H1 (cell line): ENCODE measurements at regions of chr14 and their contacts with region 1.

Region 1: DNA sequence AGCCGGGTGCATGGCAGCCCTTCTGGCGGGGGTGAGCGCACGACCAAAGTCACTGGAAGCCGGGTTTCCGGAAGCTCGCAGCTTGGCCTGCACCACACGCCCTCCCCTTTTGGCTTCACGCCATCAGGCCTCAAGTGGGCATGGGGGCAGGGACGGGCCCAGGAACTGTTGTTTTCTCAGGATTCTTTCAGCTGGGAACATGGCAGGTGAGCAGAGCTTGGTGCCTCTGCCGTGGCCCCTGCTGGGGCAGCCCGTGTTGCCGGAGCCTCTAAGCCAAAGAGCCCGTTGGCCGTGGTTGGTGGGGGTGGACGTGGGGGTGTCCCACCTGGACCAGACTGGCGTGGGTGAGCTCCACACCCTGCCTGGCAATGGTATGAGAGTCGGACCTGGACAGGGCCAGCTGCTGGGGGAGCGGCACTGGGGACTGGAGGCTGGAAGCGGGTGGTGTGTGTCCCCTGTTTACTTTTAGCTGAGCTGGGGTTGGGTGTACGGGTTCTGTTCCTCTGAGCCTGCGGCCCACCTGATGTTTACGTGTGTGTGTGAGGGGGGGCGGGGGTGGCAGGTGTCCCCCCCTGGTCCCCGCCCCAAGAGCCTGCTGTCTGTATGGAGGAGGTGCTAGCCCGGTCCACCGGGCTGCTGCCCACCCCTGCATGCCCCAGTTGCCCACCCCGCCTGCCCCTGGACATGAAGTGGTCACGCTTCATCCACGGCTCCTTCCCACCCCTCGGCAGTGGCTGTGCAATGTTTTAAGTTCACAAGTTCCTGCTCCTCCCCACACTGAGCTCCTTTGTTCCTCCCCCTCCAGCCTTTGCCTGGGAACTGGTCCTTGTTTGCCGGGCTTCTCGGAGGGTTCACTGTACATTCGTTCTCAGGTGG is 28.7 kb upstream of the PLD4 start:
- DNase-seq: peak in 1 of 2 experiments; percentile 46
- H3K4me3 ChIP-seq: no peak overlapping the region
- H3K27ac ChIP-seq: no peak overlapping the region
- H3K4me1 ChIP-seq: peaks cover 0 to 3% (median 0%) of the 10 kb centered on the region in 4 experiments; a peak in 1 of 7 replicates
- H3K27me3 ChIP-seq: no peaks in the 10 kb centered on the region
- CTCF ChIP-seq: no peak
- EP300 ChIP-seq: no peak
- POLR2A ChIP-seq: no peak
- RAD21 ChIP-seq: no peak

Region 2: DNA sequence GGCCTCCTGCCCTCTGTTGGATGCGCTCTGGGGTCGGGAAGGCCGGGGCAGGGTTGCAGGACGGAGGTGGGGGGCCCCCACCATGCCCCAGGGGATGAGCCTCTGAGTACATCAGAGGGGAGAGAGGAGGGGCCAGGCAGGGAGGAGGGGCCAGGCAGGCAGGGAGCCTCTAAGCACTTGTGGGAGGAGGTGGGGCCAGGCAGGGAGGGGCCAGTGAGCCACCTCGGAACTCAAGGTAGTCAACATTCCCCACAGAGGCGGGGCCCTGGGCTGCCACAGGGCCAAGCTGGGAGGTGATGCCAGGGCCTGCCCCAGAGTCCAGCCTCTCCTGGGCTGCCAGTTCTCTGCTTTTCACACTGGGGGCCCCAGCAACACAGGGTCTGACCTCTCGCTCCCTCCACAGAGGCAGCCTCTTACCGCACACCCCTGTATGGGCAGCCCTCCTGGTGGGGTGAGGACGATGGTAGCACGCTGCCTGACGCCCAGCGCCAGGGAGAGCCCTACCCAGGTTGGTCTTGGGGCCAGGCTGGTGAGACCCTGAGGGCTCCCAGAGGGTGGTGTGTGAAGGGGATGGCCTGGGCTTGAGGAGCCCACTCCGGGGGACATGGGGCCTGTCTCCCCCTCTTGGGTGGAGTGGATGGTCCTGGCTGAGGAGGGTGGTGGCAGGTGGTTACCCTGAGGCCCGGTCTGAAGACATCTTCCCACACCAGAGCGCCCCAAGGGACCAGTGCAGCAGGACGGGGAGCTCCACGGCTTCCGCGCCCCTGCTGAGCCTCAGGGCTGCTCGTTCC is 13.5 kb before region 1 on chr14:
- CTCF ChIA-PET with region 1: interaction called, 26 read pairs
- POLR2A ChIA-PET with region 1: interaction called, 8 read pairs
- DNase-seq: peak; percentile 49 to 76
- H3K4me3 ChIP-seq: no peak overlapping the region
- H3K27ac ChIP-seq: no peak overlapping the region
- H3K4me1 ChIP-seq: peaks cover 0 to 10% (median 0%) of the 10 kb centered on the region in 4 experiments; a peak in 1 of 7 replicates
- H3K27me3 ChIP-seq: no peaks in the 10 kb centered on the region
- CTCF ChIP-seq: no peak
- EP300 ChIP-seq: no peak
- POLR2A ChIP-seq: no peak
- RAD21 ChIP-seq: no peak

Region 3: DNA sequence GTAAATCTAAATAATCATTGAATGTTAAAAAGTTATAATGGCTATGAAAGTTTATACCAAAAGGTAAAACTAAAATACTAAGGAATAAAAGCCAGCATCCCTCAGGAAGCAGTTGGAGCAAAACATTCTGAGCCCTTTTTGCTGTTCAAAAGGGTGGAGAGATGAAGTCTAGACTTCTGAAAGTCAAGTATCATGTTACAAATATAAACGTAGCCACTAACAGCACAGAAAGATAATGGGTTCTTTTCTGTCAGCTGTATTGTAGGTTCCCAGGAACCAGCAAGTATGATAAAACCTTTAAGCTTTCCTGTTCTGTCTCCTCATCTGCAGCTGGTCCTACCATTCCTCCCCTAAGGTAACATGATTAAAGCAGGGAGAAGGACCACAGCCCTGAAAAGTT is 12.3 kb after region 1 on chr14:
- CTCF ChIA-PET with region 1: interaction called, 20 read pairs
- POLR2A ChIA-PET with region 1: no interaction called
- DNase-seq: no peak
- H3K4me3 ChIP-seq: no peak overlapping the region
- H3K27ac ChIP-seq: no peak overlapping the region
- H3K4me1 ChIP-seq: no peaks in the 10 kb centered on the region
- H3K27me3 ChIP-seq: peaks cover 0 to 3% (median 1%) of the 10 kb centered on the region in 4 experiments; a peak in 2 of 7 replicates
- CTCF ChIP-seq: no peak
- EP300 ChIP-seq: no peak
- POLR2A ChIP-seq: no peak
- RAD21 ChIP-seq: no peak